ENCODE measurements at regions of chr7 and their contacts with region 1.

Region 1: DNA sequence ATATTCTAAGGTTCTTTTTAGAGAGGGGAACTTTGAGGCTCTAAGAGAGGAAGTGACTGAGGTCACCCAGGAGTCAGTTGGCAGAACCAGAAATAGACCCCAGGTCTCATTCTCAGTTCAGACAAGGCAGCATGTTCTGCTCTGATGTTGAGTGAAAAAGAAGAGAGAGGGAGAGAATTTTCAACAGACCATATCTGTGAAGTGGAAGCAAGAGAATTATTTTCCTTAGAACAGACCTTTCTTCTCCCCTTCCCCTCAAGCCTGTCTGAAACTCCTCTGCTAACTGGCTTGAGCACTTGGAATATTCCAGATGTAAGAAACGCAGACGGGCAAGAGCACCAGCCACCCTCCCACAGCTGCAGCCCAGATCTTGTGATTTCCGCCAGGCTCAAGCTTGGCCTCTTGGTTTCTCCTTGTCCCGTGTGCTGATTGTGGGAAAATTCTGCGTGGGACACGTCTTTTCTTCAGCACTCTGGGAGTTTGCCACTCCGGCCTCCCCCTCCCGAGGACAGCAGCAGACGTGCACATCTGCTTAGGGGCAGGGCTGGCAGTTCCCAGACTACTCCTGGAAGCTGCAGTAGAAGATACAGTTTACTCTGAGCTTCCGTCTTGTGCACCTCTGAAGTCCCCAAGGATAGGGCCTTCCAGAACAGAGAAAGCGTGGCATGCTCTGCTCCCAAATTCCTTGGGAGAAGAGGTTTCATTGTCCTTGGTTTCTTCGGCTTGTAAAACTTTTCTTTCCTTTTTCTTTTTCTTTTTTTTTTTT is 22.7 kb upstream of the IKZF1 start:
- DNase-seq: peak; percentile 51
- ATAC-seq: peak; percentile 75
- H3K4me3 Mint-ChIP-seq: peak overlapping the region; percentile 56
- H3K27ac Mint-ChIP-seq: peak overlapping the region; percentile 87
- H3K4me1 Mint-ChIP-seq: peaks cover 66% of the 10 kb centered on the region
- H3K27me3 Mint-ChIP-seq: no peaks in the 10 kb centered on the region

Region 2: DNA sequence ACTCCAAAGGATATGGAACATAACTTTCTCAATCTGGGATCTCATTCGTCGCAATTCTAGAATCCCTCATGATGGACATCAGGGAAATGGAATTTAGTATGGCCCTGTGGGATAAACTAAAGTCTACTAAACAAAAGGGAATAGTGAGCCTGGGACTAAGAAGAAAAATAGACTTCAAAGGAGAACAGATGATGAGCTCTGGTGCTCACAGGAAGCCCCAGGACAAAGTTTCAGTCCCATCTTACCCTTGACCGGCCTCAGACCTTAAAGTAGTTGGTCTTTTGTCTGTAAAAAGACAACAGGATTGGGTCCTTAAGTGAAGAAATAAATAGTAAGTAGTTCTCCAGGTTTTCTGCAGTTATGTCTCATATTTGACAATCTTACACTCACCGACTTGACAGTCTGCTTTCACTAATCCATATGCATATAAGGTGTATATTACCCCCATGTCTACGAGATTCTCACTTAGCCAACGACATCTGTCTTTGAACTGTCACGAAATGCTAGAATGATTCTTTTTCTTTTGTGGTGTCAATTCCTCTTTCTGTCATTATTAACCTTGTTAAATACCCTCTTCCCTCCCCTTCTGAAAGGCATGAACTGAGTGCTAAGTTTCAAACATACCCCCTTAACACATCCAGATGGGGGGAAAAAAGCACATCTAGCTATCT is 11.8 kb after region 1 on chr7:
- CTCF ChIA-PET with region 1: interaction called, 12 read pairs
- POLR2A ChIA-PET with region 1: no interaction called
- DNase-seq: no peak
- ATAC-seq: no peak
- H3K4me3 Mint-ChIP-seq: no peak overlapping the region
- H3K27ac Mint-ChIP-seq: no peak overlapping the region
- H3K4me1 Mint-ChIP-seq: peaks cover 9% of the 10 kb centered on the region
- H3K27me3 Mint-ChIP-seq: no peaks in the 10 kb centered on the region